ENCODE measurements at regions of chr15 and their contacts with region 1.

Region 1: DNA sequence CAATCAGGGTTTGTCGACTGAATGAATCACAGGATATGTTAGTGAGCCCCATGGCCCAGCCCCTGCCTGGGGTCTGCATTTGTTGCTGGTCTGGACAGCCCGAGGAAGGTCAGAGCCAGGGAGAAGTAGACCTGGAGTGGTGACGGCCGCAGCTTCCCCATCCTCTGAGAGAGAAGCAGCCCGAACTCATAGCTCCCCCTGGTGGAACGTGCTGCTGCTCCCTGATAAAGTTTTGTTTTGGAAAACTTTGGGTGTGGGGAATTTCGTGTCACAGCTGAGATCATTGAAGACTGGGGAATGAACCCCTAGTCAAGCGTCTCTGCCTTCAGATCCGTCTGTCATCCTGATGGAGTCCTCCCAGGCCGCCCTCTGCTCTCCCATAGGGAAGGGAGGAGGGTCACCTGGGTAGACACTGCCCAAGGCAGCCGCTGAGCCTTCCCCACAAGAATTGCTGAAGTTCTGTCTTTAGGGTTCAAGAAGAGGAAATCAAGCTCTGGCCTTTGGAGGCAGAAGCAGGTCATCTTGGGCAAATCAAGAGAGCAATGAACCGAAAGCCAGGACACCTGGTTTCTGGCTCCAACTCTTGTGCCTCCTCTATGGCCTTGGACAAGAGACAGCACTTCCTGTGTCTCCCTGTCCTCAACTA is 60.5 kb downstream of the GLDN start:
- DNase-seq: no peak
- ATAC-seq: peak; percentile 81
- H3K4me3 ChIP-seq: no peak overlapping the region
- H3K27ac ChIP-seq: no peak overlapping the region
- H3K4me1 ChIP-seq: no peaks in the 10 kb centered on the region
- H3K27me3 ChIP-seq: no peaks in the 10 kb centered on the region
- CTCF ChIP-seq: peak; percentile 40 to 84 (median 82); a peak in 5 of 6 replicates
- POLR2A ChIP-seq: no peak
- RAD21 ChIP-seq: peak; percentile 60

Region 2: DNA sequence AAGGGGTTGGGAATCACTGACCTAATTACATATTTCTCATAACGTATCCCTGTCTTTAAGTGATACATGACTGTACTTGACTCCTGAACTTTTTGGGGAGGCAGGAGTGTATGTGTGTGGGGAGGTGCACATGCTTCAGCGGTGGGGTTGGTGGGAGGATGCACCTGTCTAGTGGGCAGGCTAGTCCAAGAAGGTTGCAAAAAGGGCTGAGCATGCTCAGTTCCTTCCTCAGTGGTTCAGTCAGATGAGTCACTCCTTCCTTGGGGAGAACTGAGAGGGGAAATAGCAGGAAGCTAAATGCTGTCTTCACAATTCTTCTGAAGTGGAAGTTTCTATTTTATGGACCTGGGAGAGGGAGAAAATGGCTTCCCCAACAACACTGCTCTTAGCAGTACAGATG is 518.1 kb before region 1 on chr15:
- CTCF ChIA-PET with region 1: no interaction called
- POLR2A ChIA-PET with region 1: no interaction called
- RAD21 ChIA-PET with region 1: no interaction called
- intact Hi-C with region 1: no loop called
- DNase-seq: no peak
- ATAC-seq: 0 out of 2 replicates have a peak, but pooled peaks have one; percentile 21
- H3K4me3 ChIP-seq: no peak overlapping the region
- H3K27ac ChIP-seq: no peak overlapping the region
- H3K4me1 ChIP-seq: peaks cover 6 to 28% of the 10 kb centered on the region in 2 experiments; a peak in 3 of 4 replicates
- H3K27me3 ChIP-seq: no peaks in the 10 kb centered on the region
- CTCF ChIP-seq: no peak
- POLR2A ChIP-seq: no peak
- RAD21 ChIP-seq: no peak

Region 3: GRCh38 chr15:51499379-51499976 is 97.5 kb after region 1 on chr15:
- CTCF ChIA-PET with region 1: no interaction called
- POLR2A ChIA-PET with region 1: no interaction called
- RAD21 ChIA-PET with region 1: no interaction called
- intact Hi-C with region 1: loop called (anchors 5 kb)
- DNase-seq: peak; percentile 50
- ATAC-seq: peak; percentile 95
- H3K4me3 ChIP-seq: no peak overlapping the region
- H3K27ac ChIP-seq: no peak overlapping the region
- H3K4me1 ChIP-seq: peaks cover 0 to 7% of the 10 kb centered on the region in 2 experiments; a peak in 2 of 4 replicates
- H3K27me3 ChIP-seq: no peaks in the 10 kb centered on the region
- CTCF ChIP-seq: peak; percentile 40 to 78 (median 73); a peak in 5 of 6 replicates
- POLR2A ChIP-seq: no peak
- RAD21 ChIP-seq: peak; percentile 74

Region 4: GRCh38 chr15:51641528-51642130 is 239.6 kb after region 1 on chr15:
- CTCF ChIA-PET with region 1: no interaction called
- POLR2A ChIA-PET with region 1: no interaction called
- RAD21 ChIA-PET with region 1: no interaction called
- intact Hi-C with region 1: no loop called
- DNase-seq: no peak
- ATAC-seq: no peak
- H3K4me3 ChIP-seq: no peak overlapping the region
- H3K27ac ChIP-seq: no peak overlapping the region
- H3K4me1 ChIP-seq: no peaks in the 10 kb centered on the region
- H3K27me3 ChIP-seq: no peaks in the 10 kb centered on the region
- CTCF ChIP-seq: no peak
- POLR2A ChIP-seq: no peak
- RAD21 ChIP-seq: no peak

Measured in HCT116 (cell line).